GM12878 (cell line): ENCODE measurements at regions of chr7 and their contacts with region 1.

Region 1: GRCh38 chr7:22992874-22993840 is 20.8 kb downstream of the HYCC1 start:
- DNase-seq: peak; percentile 65
- ATAC-seq: peak; percentile 85
- H3K4me3 ChIP-seq: peak overlapping the region; percentile 50
- H3K27ac ChIP-seq: peak overlapping the region; percentile 68
- H3K4me1 ChIP-seq: peaks cover 29% of the 10 kb centered on the region
- H3K27me3 ChIP-seq: no peaks in the 10 kb centered on the region
- CTCF ChIP-seq: no peak
- EP300 ChIP-seq: peak in 1 of 2 experiments; percentile 19; a peak in 1 of 4 replicates
- POLR2A ChIP-seq: no peak
- RAD21 ChIP-seq: no peak

Region 2: GRCh38 chr7:22854158-22855048 is 138.8 kb before region 1 on chr7:
- CTCF ChIA-PET with region 1: interaction called, 10 read pairs
- POLR2A ChIA-PET with region 1: interaction called, 5 read pairs
- RAD21 ChIA-PET with region 1: interaction called, 8 read pairs
- SMC1A ChIA-PET with region 1: interaction called, 17 read pairs
- in situ Hi-C with region 1: no loop called
- intact Hi-C with region 1: no loop called
- DNase-seq: peak; percentile 63
- ATAC-seq: peak; percentile 84
- H3K4me3 ChIP-seq: peak overlapping the region; percentile 84
- H3K27ac ChIP-seq: peak overlapping the region; percentile 94
- H3K4me1 ChIP-seq: peaks cover 14% of the 10 kb centered on the region
- H3K27me3 ChIP-seq: no peaks in the 10 kb centered on the region
- CTCF ChIP-seq: peak in 1 of 3 experiments; percentile 44; a peak in 1 of 6 replicates
- EP300 ChIP-seq: 0 out of 4 replicates have a peak, but pooled peaks of 1 of the 2 experiments have one; percentile 21
- POLR2A ChIP-seq: peak; percentile 89
- RAD21 ChIP-seq: no peak

Region 3: GRCh38 chr7:22885797-22886261 is 107.3 kb before region 1 on chr7:
- CTCF ChIA-PET with region 1: interaction called, 4 read pairs
- POLR2A ChIA-PET with region 1: interaction called, 4 read pairs
- RAD21 ChIA-PET with region 1: interaction called, 9 read pairs
- SMC1A ChIA-PET with region 1: interaction called, 12 read pairs
- in situ Hi-C with region 1: no loop called
- intact Hi-C with region 1: no loop called
- DNase-seq: peak; percentile 88
- ATAC-seq: peak; percentile 90
- H3K4me3 ChIP-seq: no peak overlapping the region; the same call in 1 of the 2 replicates
- H3K27ac ChIP-seq: peak overlapping the region; percentile 91
- H3K4me1 ChIP-seq: peaks cover 15% of the 10 kb centered on the region
- H3K27me3 ChIP-seq: no peaks in the 10 kb centered on the region
- CTCF ChIP-seq: no peak
- EP300 ChIP-seq: peak; percentile 51 to 70; a peak in 2 of 4 replicates
- POLR2A ChIP-seq: peak; percentile 50
- RAD21 ChIP-seq: no peak

Region 4: GRCh38 chr7:22972207-22972606 is 20.9 kb before region 1 on chr7:
- CTCF ChIA-PET with region 1: interaction called, 3 read pairs
- POLR2A ChIA-PET with region 1: no interaction called
- RAD21 ChIA-PET with region 1: no interaction called
- SMC1A ChIA-PET with region 1: interaction called, 17 read pairs
- in situ Hi-C with region 1: no loop called
- intact Hi-C with region 1: no loop called
- DNase-seq: no peak
- ATAC-seq: no peak
- H3K4me3 ChIP-seq: no peak overlapping the region
- H3K27ac ChIP-seq: no peak overlapping the region
- H3K4me1 ChIP-seq: no peaks in the 10 kb centered on the region
- H3K27me3 ChIP-seq: no peaks in the 10 kb centered on the region
- CTCF ChIP-seq: no peak
- EP300 ChIP-seq: no peak
- POLR2A ChIP-seq: no peak
- RAD21 ChIP-seq: no peak

Region 5: DNA sequence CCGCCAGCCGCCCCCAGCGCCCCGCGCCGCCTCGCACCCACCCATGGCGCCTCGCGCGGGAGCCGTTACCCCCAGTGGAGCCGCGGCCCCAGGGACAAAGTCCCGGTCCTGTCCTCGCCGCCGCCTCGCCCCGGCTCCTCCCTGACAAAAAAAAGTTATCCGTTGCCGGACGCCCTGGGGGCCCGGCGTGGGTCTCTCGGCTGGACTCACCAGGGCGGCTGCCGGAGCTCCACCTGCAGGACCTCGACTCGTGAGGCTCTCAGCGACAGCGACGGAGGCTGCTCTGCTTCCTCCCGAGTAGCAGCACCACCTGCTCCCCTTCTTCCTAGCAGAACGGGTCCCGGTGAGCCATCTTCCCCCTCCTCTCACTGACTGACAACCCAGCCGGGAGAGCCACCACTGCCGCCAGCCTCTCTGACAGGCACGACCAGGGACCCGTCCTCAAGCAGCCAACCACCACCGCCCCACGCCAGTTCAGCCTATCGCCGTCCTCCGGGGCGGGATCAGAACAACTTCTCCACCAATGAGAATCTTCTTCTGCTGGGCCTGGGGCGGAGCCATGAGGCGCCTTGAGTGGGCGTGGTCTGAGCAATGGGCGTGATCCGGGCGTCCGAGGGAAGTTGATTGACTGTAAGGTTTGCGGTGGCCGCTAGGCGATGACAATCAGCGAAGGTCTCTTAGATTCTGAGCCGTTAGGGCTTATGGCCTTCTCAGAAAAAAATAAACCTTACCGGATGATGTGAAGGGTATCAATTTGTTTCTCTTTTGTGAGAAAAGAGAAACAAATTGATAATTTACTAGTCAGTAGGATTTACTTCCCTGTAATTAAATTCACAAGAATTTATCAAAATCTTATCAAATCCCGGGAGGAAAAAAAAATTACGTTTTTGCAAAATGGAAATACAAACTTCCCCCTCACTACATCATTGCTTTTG is 20.8 kb after region 1 on chr7 and contains the start of gene HYCC1:
- CTCF ChIA-PET with region 1: interaction called, 9 read pairs
- POLR2A ChIA-PET with region 1: interaction called, 14 read pairs
- RAD21 ChIA-PET with region 1: interaction called, 38 read pairs
- SMC1A ChIA-PET with region 1: interaction called, 60 read pairs
- in situ Hi-C with region 1: no loop called
- intact Hi-C with region 1: no loop called
- DNase-seq: peak; percentile 98
- ATAC-seq: peak; percentile 94
- H3K4me3 ChIP-seq: peak within 1 kb of the TSS; percentile 95
- H3K27ac ChIP-seq: peak within 1 kb of the TSS; percentile 74
- H3K4me1 ChIP-seq: peaks cover 20% of the 10 kb centered on the region
- H3K27me3 ChIP-seq: no peaks in the 10 kb centered on the region
- CTCF ChIP-seq: peak; percentile 62 to 64 (median 64)
- EP300 ChIP-seq: no peak
- POLR2A ChIP-seq: peak; percentile 99
- RAD21 ChIP-seq: peak; percentile 34; the same call in 1 of the 2 replicates
- polyA plus RNA-seq, gene HYCC1: 8.5 to 9.9 TPM

Region 6: GRCh38 chr7:23175938-23176337 is 182.8 kb after region 1 on chr7:
- CTCF ChIA-PET with region 1: no interaction called
- POLR2A ChIA-PET with region 1: no interaction called
- RAD21 ChIA-PET with region 1: no interaction called
- SMC1A ChIA-PET with region 1: no interaction called
- in situ Hi-C with region 1: no loop called
- intact Hi-C with region 1: no loop called
- DNase-seq: no peak
- ATAC-seq: no peak
- H3K4me3 ChIP-seq: no peak overlapping the region
- H3K27ac ChIP-seq: no peak overlapping the region
- H3K4me1 ChIP-seq: no peaks in the 10 kb centered on the region
- H3K27me3 ChIP-seq: no peaks in the 10 kb centered on the region
- CTCF ChIP-seq: no peak
- EP300 ChIP-seq: no peak
- POLR2A ChIP-seq: no peak
- RAD21 ChIP-seq: no peak

Region 7: GRCh38 chr7:23226844-23227450 is 233.8 kb after region 1 on chr7:
- CTCF ChIA-PET with region 1: no interaction called
- POLR2A ChIA-PET with region 1: no interaction called
- RAD21 ChIA-PET with region 1: no interaction called
- SMC1A ChIA-PET with region 1: no interaction called
- in situ Hi-C with region 1: no loop called
- intact Hi-C with region 1: no loop called
- DNase-seq: no peak
- ATAC-seq: no peak
- H3K4me3 ChIP-seq: no peak overlapping the region
- H3K27ac ChIP-seq: no peak overlapping the region
- H3K4me1 ChIP-seq: peaks cover 2% of the 10 kb centered on the region; the same call in 1 of the 2 replicates
- H3K27me3 ChIP-seq: no peaks in the 10 kb centered on the region
- CTCF ChIP-seq: no peak
- EP300 ChIP-seq: no peak
- POLR2A ChIP-seq: no peak
- RAD21 ChIP-seq: no peak